BJ (cell line): ENCODE measurements at regions of chr12 and their contacts with region 1.

Region 1: GRCh38 chr12:57583008-57583831 is 7.8 kb upstream of the PIP4K2C start:
- DNase-seq: no peak
- H3K4me3 ChIP-seq: no peak overlapping the region
- H3K27me3 ChIP-seq: peaks cover 1% of the 10 kb centered on the region; the same call in 1 of the 2 replicates
- CTCF ChIP-seq: peak; percentile 88

Region 2: DNA sequence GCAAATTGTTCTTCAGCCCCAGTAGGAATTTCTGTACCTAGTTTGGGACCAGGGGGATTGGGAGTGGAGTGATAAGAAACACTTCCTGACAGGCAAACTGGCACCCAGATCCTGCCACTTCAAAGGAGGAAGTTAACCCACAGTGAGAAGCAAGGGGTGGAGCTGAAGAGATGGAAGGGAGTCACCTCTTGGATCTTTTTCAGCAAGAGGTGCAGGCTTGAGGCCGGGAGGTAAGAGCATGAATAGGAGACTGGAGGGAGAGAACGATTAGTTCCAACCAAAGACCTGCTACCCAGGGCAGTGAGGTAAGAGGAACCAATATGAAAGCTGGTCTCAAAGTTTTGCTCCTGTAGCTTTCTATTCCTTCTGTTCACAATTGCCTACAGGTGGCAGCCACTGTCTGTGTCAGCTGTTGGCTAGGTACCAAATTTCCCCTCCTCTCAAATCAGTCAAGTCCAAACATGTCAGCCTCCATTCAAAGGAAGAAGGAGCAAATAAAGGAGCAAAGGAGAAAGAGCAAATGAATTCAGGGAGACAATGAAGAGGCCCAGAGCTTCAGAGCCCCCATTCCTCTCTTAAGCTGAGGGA is 552.0 kb before region 1 on chr12:
- CTCF ChIA-PET with region 1: no interaction called
- POLR2A ChIA-PET with region 1: no interaction called
- DNase-seq: no peak
- H3K4me3 ChIP-seq: no peak overlapping the region
- H3K27me3 ChIP-seq: peaks cover 22% of the 10 kb centered on the region
- CTCF ChIP-seq: no peak

Region 3: GRCh38 chr12:57520053-57520871 is 63.0 kb before region 1 on chr12 and contains the start of gene DDIT3:
- CTCF ChIA-PET with region 1: no interaction called
- POLR2A ChIA-PET with region 1: no interaction called
- DNase-seq: peak; percentile 92
- H3K4me3 ChIP-seq: peak within 1 kb of the TSS; percentile 76
- H3K27me3 ChIP-seq: no peaks in the 10 kb centered on the region
- CTCF ChIP-seq: no peak
- polyA plus RNA-seq, gene DDIT3: 65.4 and 78.1 TPM in 2 replicates

Region 4: DNA sequence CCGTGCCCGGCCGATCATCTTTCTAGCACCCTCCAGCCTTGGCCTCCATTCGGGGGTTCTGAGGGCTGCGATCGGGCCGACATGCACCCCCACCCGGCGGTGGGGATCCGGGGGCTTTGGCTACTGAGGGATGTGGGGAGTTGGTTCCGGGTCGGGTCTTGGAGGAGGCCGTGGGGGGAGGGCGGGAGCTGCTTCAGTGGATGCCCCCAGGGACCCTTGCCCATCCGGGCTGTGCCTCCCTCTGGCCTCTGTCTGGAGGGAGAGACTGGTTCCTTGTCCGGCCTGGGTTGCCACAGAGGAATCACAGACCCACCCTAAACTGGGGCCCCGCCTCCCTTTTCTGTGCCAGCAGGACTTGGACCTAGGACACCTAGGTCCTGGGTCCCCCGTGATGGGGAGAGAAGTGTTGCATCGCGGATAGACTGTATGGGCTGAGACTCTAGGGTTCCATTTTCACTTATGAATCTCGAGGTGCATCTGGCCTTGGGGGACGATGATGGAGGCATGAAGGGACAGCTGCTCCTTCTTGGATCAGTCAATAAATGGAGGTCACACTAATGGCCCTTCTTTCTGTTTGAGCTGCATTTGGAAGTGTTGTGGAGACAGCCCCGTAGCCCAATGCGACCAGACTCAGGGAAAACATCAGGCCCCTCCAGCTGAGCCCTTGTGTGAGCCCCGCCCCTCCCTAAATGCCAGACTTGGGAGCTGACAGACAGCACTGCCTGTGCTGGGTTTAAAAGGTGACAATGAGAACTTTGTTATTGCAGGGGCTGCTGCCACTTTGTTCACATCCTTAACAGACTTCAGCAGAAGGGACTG is 22.0 kb after region 1 on chr12:
- CTCF ChIA-PET with region 1: interaction called, 51 read pairs
- POLR2A ChIA-PET with region 1: no interaction called
- DNase-seq: no peak
- H3K4me3 ChIP-seq: peak overlapping the region; percentile 64
- H3K27me3 ChIP-seq: no peaks in the 10 kb centered on the region
- CTCF ChIP-seq: no peak

Region 5: GRCh38 chr12:57611108-57611809 is 28.0 kb after region 1 on chr12 and contains the start of gene ARHGEF25:
- CTCF ChIA-PET with region 1: interaction called, 51 read pairs
- POLR2A ChIA-PET with region 1: no interaction called
- DNase-seq: no peak
- H3K4me3 ChIP-seq: peak within 1 kb of the TSS; percentile 82
- H3K27me3 ChIP-seq: no peaks in the 10 kb centered on the region
- CTCF ChIP-seq: no peak
- polyA plus RNA-seq, gene ARHGEF25: 18.0 and 26.0 TPM in 2 replicates

Region 6: DNA sequence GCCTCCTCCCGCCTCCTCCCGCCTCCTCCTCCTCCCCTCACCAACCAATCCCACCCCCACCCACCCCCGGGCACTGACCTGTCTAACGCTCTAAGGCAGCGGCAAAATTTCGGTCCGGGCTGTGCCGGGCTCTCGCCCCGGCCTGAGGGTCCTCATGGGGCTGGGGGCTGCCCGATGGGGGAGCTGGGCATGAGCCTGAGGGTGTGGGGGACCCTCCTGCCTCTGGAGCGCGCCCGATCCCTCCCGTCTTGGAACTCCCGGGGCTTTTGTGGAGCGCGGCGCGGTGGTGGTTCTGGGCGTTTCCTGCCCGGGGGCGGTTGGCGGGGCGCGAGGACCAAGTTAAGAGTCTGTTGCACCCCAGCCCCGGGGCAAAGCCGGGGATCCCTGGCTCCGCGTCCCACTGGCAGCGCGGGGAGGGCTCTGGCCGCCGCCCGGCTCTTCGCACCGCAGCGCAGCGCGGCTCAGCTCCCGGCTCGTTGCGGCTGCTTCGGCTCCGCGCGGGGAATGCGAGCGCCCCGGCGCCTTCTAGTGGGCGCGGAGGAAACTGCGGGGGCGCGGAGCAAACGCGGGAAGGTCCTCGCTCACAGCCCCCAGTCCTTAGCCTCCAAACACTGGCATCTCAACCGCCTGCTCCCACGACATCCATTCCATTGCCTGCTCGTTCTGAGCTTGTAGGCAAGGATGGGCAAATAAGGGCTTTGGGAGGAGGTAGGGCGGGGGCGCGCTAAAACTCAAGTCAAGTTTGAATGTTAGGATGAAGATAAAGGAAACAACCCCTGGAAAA is 49.7 kb after region 1 on chr12 and contains the start of gene B4GALNT1:
- CTCF ChIA-PET with region 1: interaction called, 257 read pairs
- POLR2A ChIA-PET with region 1: no interaction called
- DNase-seq: no peak
- H3K4me3 ChIP-seq: peak within 1 kb of the TSS; percentile 49
- H3K27me3 ChIP-seq: peaks cover 16% of the 10 kb centered on the region
- CTCF ChIP-seq: peak; percentile 87
- polyA plus RNA-seq, gene B4GALNT1: 1.2 and 2.7 TPM in 2 replicates

Region 7: GRCh38 chr12:57693659-57694458 is 110.6 kb after region 1 on chr12 and contains the start of gene OS9:
- CTCF ChIA-PET with region 1: interaction called, 17 read pairs
- POLR2A ChIA-PET with region 1: no interaction called
- DNase-seq: peak; percentile 100
- H3K4me3 ChIP-seq: peak within 1 kb of the TSS; percentile 85
- H3K27me3 ChIP-seq: no peaks in the 10 kb centered on the region
- CTCF ChIP-seq: peak; percentile 83
- polyA plus RNA-seq, gene OS9: 312 and 415 TPM in 2 replicates

Region 8: GRCh38 chr12:57735952-57736740 is 152.9 kb after region 1 on chr12:
- CTCF ChIA-PET with region 1: interaction called, 13 read pairs
- POLR2A ChIA-PET with region 1: no interaction called
- DNase-seq: no peak
- H3K4me3 ChIP-seq: peak overlapping the region; percentile 22; the same call in 1 of the 2 replicates
- H3K27me3 ChIP-seq: peaks cover 49% of the 10 kb centered on the region
- CTCF ChIP-seq: peak; percentile 56